ENCODE measurements at regions of chr1 and their contacts with region 1.

Region 1: GRCh38 chr1:206489980-206490770 is 17.2 kb upstream of the RASSF5 start:
- DNase-seq: peak; percentile 63
- H3K4me3 ChIP-seq: no peak overlapping the region
- H3K27ac ChIP-seq: no peak overlapping the region
- H3K4me1 ChIP-seq: no peaks in the 10 kb centered on the region
- H3K27me3 ChIP-seq: no peaks in the 10 kb centered on the region
- CTCF ChIP-seq: peak; percentile 73 to 95 (median 89)
- POLR2A ChIP-seq: no peak

Region 2: GRCh38 chr1:206411321-206411720 is 78.9 kb before region 1 on chr1:
- intact Hi-C with region 1: no loop called
- DNase-seq: no peak
- H3K4me3 ChIP-seq: no peak overlapping the region
- H3K27ac ChIP-seq: no peak overlapping the region
- H3K4me1 ChIP-seq: no peaks in the 10 kb centered on the region
- H3K27me3 ChIP-seq: no peaks in the 10 kb centered on the region
- CTCF ChIP-seq: no peak
- POLR2A ChIP-seq: no peak

Region 3: DNA sequence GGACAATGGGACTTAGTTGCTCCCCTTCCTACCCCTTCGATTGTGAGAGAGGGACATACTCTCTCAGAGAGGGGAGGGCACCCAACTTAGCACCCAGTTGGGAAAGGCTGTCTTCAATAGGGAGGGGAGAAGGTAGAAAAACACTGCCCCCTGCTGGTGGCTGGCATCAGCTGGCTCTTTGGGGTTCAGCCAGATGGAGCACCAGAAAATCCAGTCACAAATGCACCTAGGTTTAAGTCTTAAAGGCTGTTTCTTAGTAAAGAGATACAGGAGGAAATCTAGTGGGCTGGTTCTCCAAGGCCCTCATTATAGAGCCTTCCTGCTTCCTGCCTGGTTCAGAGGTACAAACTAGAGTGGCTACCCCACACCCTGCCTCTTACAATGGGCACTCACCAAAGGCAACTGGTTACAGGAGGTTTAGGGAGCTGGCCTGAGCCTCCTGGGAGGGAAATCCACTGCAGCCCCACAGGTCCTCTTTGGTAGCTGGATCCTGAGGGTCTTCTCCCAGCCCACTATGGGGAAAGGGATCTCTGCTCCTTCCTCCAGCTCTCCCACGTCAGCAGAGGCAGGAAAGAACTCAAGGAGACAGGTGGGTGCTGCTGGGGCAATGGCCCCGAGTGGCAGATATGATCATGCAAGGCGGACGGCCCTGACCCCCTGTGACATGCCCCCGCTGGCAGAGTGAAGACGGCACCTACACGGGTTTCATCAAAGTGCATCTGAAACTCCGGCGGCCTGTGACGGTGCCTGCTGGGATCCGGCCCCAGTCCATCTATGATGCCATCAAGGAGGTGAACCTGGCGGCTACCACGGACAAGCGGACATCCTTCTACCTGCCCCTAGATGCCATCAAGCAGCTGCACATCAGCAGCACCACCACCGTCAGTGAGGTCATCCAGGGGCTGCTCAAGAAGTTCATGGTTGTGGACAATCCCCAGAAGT is 93.8 kb after region 1 on chr1:
- intact Hi-C with region 1: loop called (anchors 2 kb)
- DNase-seq: peak; percentile 79
- H3K4me3 ChIP-seq: no peak overlapping the region
- H3K27ac ChIP-seq: no peak overlapping the region
- H3K4me1 ChIP-seq: peaks cover 8% of the 10 kb centered on the region
- H3K27me3 ChIP-seq: no peaks in the 10 kb centered on the region
- CTCF ChIP-seq: peak; percentile 91 to 96 (median 94)
- POLR2A ChIP-seq: no peak

Region 4: GRCh38 chr1:206982216-206982615 is 492.0 kb after region 1 on chr1:
- intact Hi-C with region 1: loop called (anchors 10 kb)
- DNase-seq: peak; percentile 60
- H3K4me3 ChIP-seq: no peak overlapping the region
- H3K27ac ChIP-seq: no peak overlapping the region
- H3K4me1 ChIP-seq: no peaks in the 10 kb centered on the region
- H3K27me3 ChIP-seq: no peaks in the 10 kb centered on the region
- CTCF ChIP-seq: peak; percentile 13 to 79 (median 66)
- POLR2A ChIP-seq: no peak

Measured in prostate gland (tissue), 2 donors.